Dorsolateral prefrontal cortex (tissue), 120 donors: ENCODE measurements at regions of chr13 and their contacts with region 1.

Region 1: GRCh38 chr13:40666045-40666904 is at the start of gene FOXO1:
- DNase-seq: peak; percentile 70 to 92 (median 80)
- H3K4me3 ChIP-seq: peak within 1 kb of the TSS; percentile 59 to 93 (median 83)
- H3K27ac ChIP-seq: peak within 1 kb of the TSS; percentile 77 to 99 (median 95)
- H3K27me3 ChIP-seq: peaks cover 0 to 40% (median 4%) of the 10 kb centered on the region in 45 donors
- CTCF ChIP-seq: peak in 4 of 56 donors; percentile 2 to 36 (median 8)
- total RNA-seq, gene FOXO1: 9.8 to 31.6 (median 16.3) TPM

Region 2: DNA sequence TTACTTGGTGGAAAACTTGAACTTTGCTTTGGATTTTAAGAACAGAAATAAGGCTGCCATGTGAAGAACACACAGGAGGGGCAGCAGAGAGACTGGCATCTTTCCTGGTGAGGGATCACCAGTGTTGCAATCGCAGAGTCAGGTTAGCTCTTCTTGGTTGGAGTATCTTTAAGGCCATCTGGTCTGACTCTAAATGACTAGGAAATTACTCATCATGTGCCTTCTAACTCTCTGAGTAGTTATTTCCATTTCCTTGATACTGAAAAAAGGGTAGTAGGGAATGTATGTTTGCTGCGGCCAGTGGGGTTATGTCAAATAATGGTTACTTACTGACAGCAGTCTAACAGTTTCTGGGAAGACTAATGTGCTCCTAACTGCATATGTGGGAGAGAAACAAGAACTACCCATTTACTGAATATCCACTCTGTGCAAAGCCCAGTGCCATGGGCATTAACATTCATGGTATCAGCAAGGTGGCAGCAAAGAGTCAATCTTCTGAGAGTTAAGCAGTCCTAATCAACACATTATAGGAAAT is 888.7 kb before region 1 on chr13:
- intact Hi-C with region 1: loop called in 1 of 2 experiments (anchors 5 kb)
- DNase-seq: no peak
- H3K4me3 ChIP-seq: no peak overlapping the region
- H3K27ac ChIP-seq: no peak overlapping the region
- H3K27me3 ChIP-seq: no peaks in the 10 kb centered on the region
- CTCF ChIP-seq: peak in 43 of 56 donors; percentile 18 to 62 (median 35)

Region 3: GRCh38 chr13:40190641-40191100 is 475.6 kb before region 1 on chr13:
- intact Hi-C with region 1: loop called in 1 of 2 experiments (anchors 2 kb)
- DNase-seq: peak in 8 of 10 donors; percentile 71 to 86 (median 81)
- H3K4me3 ChIP-seq: peak overlapping the region in 11 of 59 donors; percentile 4 to 49 (median 24)
- H3K27ac ChIP-seq: peak overlapping the region; percentile 76 to 99 (median 97)
- H3K27me3 ChIP-seq: no peaks in the 10 kb centered on the region
- CTCF ChIP-seq: no peak

Region 4: GRCh38 chr13:40271931-40272775 is 394.1 kb before region 1 on chr13:
- intact Hi-C with region 1: loop called in 1 of 2 experiments (anchors 5 kb)
- DNase-seq: peak in 6 of 10 donors; percentile 24 to 67 (median 54)
- H3K4me3 ChIP-seq: no peak overlapping the region
- H3K27ac ChIP-seq: peak overlapping the region; percentile 14 to 89 (median 77)
- H3K27me3 ChIP-seq: no peaks in the 10 kb centered on the region
- CTCF ChIP-seq: no peak

Region 5: GRCh38 chr13:40477623-40478608 is 188.4 kb before region 1 on chr13:
- intact Hi-C with region 1: loop called (anchors 5 to 10 kb)
- DNase-seq: no peak
- H3K4me3 ChIP-seq: no peak overlapping the region
- H3K27ac ChIP-seq: peak overlapping the region in 39 of 59 donors; percentile 4 to 74 (median 54)
- H3K27me3 ChIP-seq: no peaks in the 10 kb centered on the region
- CTCF ChIP-seq: no peak

Region 6: DNA sequence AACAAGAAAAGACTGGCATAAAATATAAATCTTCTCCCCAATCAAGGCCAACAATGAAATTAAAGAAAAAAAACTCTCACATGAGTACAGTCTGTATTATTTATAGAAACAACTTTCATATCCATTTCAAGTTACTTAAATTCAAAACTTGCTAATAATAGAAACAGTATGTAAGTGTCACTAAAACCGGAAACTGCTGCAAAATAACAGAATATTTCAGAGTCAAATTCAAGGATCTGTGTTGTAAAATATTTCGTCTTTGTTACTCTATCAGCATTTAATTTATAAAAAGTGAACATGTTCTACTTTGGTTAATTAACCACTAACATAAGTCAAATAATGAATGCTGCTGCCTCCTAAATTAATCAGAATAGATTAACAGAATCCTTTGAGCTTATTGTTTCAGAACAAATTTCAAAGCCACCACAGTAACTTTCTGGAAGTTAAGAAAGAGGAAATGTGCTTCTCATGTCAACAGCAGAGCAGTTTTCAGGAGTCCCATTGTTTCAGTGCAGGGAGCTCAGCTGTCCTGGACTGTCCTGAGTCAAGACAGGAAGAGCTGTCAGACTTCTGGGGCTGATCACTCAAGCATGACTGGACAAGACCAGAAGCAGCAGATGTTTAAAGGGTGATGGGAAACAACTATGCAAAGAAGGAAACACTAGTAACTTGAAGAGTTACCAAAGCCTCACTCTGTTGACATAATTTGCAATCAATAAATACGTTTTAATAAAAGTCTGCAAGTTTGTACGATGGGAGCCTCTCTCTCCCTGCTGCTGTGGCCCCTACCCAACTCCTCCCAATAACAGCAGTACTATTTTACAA is 76.8 kb before region 1 on chr13:
- intact Hi-C with region 1: loop called in 1 of 2 experiments (anchors 10 kb)
- DNase-seq: peak in 2 of 10 donors; percentile 25 to 41
- H3K4me3 ChIP-seq: peak overlapping the region in 1 of 59 donors; percentile 4
- H3K27ac ChIP-seq: peak overlapping the region in 47 of 59 donors; percentile 5 to 80 (median 55)
- H3K27me3 ChIP-seq: no peaks in the 10 kb centered on the region
- CTCF ChIP-seq: no peak

Region 7: DNA sequence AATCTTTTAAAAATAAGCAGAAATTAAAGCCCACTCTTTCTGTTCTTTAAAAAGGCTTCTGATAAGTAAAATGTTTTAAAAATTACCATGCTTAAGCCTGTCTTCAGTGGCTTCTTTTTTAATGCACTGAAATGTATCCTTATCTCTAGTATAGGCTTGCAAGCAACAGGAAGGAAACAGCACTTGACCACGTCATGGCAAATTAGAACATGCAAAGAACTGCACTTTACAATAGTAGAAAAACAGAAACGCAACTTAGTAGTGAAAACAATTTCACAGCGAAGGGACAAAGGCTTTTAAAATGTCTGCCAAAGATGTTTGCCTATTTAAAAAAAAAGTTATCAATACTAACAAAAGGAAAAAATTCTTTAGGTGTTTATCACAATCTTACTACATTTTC is 316.5 kb after region 1 on chr13:
- intact Hi-C with region 1: no loop called
- DNase-seq: peak in 1 of 10 donors; percentile 23
- H3K4me3 ChIP-seq: peak overlapping the region in 54 of 59 donors; percentile 0 to 55 (median 24)
- H3K27ac ChIP-seq: peak overlapping the region in 58 of 59 donors; percentile 9 to 92 (median 81)
- H3K27me3 ChIP-seq: no peaks in the 10 kb centered on the region
- CTCF ChIP-seq: no peak

Region 8: DNA sequence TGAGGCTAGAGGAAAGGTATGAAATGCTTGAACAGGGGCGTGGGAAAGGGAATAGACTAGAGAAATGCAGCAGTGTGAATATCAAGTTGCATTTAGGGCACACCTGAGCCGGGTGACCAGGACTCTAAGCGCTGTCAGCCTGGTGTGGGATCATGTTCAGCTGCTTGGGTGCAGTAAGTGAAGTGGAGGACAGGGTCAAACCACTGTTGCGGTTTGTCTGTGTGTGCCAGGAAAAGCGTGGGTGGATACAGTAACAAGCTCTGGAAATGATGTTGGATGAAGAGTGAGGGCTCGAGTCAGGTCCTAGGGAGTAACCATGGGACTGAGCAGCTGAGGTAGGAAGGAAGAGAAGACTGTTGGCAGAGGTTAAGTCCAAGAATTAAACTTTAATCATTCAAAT is 1398.0 kb after region 1 on chr13:
- intact Hi-C with region 1: no loop called
- DNase-seq: no peak
- H3K4me3 ChIP-seq: no peak overlapping the region
- H3K27ac ChIP-seq: no peak overlapping the region
- H3K27me3 ChIP-seq: no peaks in the 10 kb centered on the region
- CTCF ChIP-seq: no peak